Activated T-helper 2 cell treated with anti-CD3 and anti-CD28 coated beads, Interferon-gamma antibody, Interleukin-2, Interleukin-4, amounts not matched to agents 10 μg/mL and 5 μg/mL and 100 μg/mL, durations not matched to agents 14 hours and 24 hours and 36 hours (primary cell): ENCODE measurements at regions of chr2 and their contacts with region 1.

Region 1: DNA sequence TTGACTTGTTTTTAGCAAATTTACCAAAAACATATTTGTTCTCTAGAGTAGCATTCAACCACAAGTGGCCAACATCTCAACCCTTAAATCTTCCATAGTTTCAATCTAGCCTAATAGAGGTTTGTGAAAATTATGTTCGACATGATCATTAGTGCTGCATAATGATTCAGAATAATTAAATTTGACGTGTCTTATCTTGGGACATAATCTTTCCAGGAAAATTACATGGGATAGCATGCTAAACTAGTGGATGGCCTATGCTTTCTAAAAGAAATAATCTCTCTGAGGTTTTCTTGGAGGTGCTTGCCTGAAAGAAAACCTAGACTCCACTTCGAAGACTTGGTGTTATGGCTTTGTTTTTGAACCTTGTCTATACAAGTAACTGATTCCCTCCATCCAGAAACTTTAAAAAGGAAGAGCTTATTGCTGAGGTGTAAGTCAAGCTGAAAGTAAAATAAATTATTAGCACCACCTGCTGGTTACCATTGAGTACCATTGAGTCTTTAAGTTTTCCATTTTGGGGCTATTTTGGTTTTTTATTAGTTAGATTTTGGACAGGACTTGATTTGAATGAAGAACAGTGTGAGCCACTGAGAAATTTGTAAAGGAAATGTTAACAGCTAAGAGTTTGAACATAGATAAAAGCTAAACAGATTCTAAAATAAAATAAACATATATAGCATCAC is 32.7 kb downstream of the COX7A2L start:
- DNase-seq: no peak
- H3K4me3 Mint-ChIP-seq: no peak overlapping the region
- H3K27ac Mint-ChIP-seq: no peak overlapping the region
- H3K4me1 Mint-ChIP-seq: peaks cover 9% of the 10 kb centered on the region
- H3K27me3 Mint-ChIP-seq: no peaks in the 10 kb centered on the region

Region 2: DNA sequence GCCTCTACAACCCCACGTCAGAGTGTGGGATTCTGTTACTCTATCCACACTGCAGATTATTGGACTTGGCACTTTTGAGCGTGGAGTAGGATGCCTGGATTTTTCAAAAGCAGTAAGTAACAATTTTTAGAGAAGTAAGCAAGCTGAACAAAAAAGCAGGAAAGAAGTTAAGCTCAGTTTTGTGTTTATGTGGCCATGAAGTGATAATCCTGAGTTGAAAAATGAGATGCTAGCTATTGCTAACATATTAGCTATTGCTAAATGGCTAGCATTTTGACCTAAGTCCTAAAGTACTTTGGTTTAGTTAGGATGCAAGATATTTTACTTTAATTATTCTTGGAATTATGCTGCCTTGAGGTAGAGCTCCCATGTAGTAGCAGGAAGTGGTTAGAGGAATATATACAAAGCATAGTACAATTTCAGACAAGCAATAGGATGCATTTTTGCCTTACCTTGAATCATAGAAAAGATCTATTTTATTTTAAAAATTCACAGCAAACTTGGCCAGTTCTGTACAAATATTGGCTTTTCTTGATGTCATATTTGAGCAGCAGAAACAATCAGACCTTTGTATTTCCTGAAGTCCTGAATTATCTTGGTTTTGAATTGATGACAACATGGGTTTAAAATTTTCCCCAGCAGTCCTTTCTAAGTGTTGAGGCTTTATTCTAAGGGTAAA is 41.9 kb before region 1 on chr2:
- intact Hi-C with region 1: loop called (anchors 5 kb)
- DNase-seq: no peak
- H3K4me3 Mint-ChIP-seq: no peak overlapping the region
- H3K27ac Mint-ChIP-seq: no peak overlapping the region
- H3K4me1 Mint-ChIP-seq: peaks cover 27% of the 10 kb centered on the region
- H3K27me3 Mint-ChIP-seq: no peaks in the 10 kb centered on the region